Natural killer cell (primary cell): ENCODE measurements at regions of chr9 and their contacts with region 1.

Region 1: GRCh38 chr9:100028201-100028784 is 70.5 kb downstream of the ERP44 start:
- DNase-seq: peak; percentile 56 to 78
- ATAC-seq: peak; percentile 94 to 100 (median 100)
- H3K4me3 ChIP-seq: no peak overlapping the region
- H3K4me3 Mint-ChIP-seq: no peak overlapping the region
- H3K27ac ChIP-seq: no peak overlapping the region
- H3K27ac Mint-ChIP-seq: peak overlapping the region in 1 of 2 donors; percentile 37
- H3K4me1 ChIP-seq: no peaks in the 10 kb centered on the region
- H3K4me1 Mint-ChIP-seq: peaks cover 18 to 30% of the 10 kb centered on the region in 2 donors
- H3K27me3 ChIP-seq: no peaks in the 10 kb centered on the region
- H3K27me3 Mint-ChIP-seq: no peaks in the 10 kb centered on the region
- CTCF ChIP-seq: peak; percentile 93

Region 2: GRCh38 chr9:100098887-100099721 is 70.8 kb after region 1 on chr9 and contains the starts of genes ERP44 and INVS:
- intact Hi-C with region 1: loop called (anchors 2 kb)
- DNase-seq: peak; percentile 91 to 98
- ATAC-seq: peak; percentile 97 to 100 (median 98)
- H3K4me3 ChIP-seq: peak within 1 kb of the TSS; percentile 73
- H3K4me3 Mint-ChIP-seq: peak within 1 kb of the TSS; percentile 99
- H3K27ac ChIP-seq: peak within 1 kb of the TSS; percentile 73
- H3K27ac Mint-ChIP-seq: peak within 1 kb of the TSS; percentile 95 to 99
- H3K4me1 ChIP-seq: peaks cover 19% of the 10 kb centered on the region
- H3K4me1 Mint-ChIP-seq: peaks cover 46 to 47% of the 10 kb centered on the region in 2 donors
- H3K27me3 ChIP-seq: no peaks in the 10 kb centered on the region
- H3K27me3 Mint-ChIP-seq: no peaks in the 10 kb centered on the region
- CTCF ChIP-seq: no peak
- total RNA-seq, gene ERP44: 14.2 to 15.4 (median 15.1) TPM
- total RNA-seq, gene INVS: 24.5 to 30.6 (median 27.4) TPM

Region 3: DNA sequence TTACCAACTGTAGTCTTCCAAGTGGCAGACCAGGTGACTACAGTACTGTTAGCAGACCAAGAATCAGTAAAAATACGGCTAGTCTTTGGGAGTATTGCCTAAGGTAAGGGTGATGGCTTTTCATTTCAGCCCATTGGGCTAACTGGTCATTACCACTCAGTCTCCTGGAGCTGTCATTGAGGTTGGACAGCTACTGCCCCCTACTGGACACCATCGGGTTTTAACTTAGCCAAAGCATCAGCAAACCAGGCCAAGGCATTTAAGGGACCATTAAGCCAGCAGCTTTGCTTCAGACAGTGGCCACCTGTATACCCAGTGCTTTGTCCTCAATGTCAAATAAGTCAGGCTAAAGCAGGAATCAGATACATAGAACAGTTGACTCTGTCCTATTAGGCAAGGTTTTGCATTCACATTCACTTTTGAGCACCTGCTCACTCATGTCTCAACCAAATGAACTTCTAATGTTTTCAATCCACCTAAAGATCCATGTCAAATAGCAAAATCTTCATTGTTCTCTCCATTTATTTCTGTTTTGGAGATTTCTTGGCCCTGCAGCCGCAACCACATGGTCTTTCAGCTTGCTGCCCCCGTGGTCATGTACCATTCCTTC is 188.0 kb after region 1 on chr9:
- intact Hi-C with region 1: loop called (anchors 1 kb)
- DNase-seq: peak; percentile 36 to 80
- ATAC-seq: peak; percentile 76 to 85 (median 78)
- H3K4me3 ChIP-seq: no peak overlapping the region
- H3K4me3 Mint-ChIP-seq: no peak overlapping the region
- H3K27ac ChIP-seq: no peak overlapping the region
- H3K27ac Mint-ChIP-seq: no peak overlapping the region
- H3K4me1 ChIP-seq: no peaks in the 10 kb centered on the region
- H3K4me1 Mint-ChIP-seq: no peaks in the 10 kb centered on the region
- H3K27me3 ChIP-seq: no peaks in the 10 kb centered on the region
- H3K27me3 Mint-ChIP-seq: no peaks in the 10 kb centered on the region
- CTCF ChIP-seq: peak; percentile 63